Activated CD4-positive, alpha-beta T cell treated with anti-CD3 and anti-CD28 coated beads, Interleukin-2, amount 10 ng/mL, durations not matched to agents 24 days and 14 days (primary cell): ENCODE measurements at regions of chr10 and their contacts with region 1.

Region 1: DNA sequence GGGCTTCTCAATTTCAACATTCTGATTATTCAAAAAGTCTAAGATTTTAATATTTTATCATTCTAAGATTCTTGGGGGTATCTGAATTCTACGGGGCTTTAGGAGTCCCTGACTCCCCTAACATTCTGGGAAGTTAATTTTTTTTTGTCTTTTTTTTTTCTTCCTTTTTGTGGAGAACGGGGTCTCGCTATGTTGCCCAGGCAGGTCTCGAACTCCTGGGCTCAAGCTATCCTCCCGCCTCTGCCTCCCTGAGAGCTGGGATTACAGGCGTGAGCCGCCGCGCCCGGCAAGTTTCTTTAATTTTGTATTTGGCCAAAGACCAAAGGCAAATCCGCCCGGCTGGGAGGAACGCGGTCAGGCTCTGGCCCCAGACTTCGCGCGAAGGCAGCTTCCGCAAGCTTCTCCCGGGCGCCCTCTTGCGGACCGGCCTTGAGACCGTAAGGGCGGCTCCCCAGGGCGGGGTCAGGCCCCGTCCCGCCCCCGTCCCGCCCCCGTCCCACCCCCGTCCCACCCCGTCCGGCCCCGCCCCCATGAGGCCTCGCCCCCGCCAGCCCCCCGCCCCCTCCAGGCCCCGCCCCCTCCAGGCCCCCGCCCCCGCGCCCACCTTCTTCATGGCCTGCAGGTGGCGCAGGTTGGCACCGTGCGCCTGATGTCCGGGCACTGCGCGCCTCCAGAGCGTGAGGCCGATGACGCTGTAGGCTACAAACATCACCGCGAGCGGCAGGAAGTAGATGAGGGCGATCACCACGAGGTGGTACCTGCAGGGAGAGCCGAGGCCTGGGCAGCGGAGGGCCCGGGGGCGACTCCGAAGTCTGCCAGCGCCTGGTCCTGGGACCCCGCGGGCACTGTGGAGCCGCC is 8.2 kb downstream of the TACR2 start:
- DNase-seq: peak; percentile 96
- H3K4me3 Mint-ChIP-seq: peak overlapping the region; percentile 80
- H3K27ac Mint-ChIP-seq: peak overlapping the region; percentile 90
- H3K4me1 Mint-ChIP-seq: peaks cover 20% of the 10 kb centered on the region
- H3K27me3 Mint-ChIP-seq: no peaks in the 10 kb centered on the region

Region 2: DNA sequence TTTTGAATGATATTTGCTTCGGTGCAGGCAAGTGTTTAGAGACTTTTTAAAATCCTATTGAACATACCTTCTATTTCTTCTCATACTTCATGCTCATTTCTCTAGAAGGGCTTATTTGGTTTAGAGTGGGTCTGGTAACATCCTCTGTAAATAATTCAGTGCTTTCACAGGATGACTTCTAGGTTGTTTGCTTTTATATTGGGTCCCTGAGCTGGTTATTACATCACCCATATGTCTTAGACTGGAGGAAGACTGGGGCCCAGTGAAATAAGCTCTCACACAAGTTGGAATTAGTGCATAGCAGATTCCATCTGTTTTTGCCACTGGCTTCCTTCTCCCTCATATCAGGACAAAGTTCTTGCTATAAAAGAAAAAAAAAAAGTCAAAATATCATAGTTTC is 222.0 kb before region 1 on chr10:
- intact Hi-C with region 1: no loop called
- DNase-seq: no peak
- H3K4me3 Mint-ChIP-seq: no peak overlapping the region
- H3K27ac Mint-ChIP-seq: peak overlapping the region; percentile 2
- H3K4me1 Mint-ChIP-seq: peaks cover 17% of the 10 kb centered on the region
- H3K27me3 Mint-ChIP-seq: no peaks in the 10 kb centered on the region

Region 3: GRCh38 chr10:69639291-69640195 is 231.0 kb after region 1 on chr10:
- intact Hi-C with region 1: loop called (anchors 2 kb)
- DNase-seq: peak; percentile 89
- H3K4me3 Mint-ChIP-seq: no peak overlapping the region
- H3K27ac Mint-ChIP-seq: no peak overlapping the region
- H3K4me1 Mint-ChIP-seq: peaks cover 2% of the 10 kb centered on the region
- H3K27me3 Mint-ChIP-seq: peaks cover 5% of the 10 kb centered on the region